ENCODE measurements at regions of chr6 and their contacts with region 1.

Region 1: DNA sequence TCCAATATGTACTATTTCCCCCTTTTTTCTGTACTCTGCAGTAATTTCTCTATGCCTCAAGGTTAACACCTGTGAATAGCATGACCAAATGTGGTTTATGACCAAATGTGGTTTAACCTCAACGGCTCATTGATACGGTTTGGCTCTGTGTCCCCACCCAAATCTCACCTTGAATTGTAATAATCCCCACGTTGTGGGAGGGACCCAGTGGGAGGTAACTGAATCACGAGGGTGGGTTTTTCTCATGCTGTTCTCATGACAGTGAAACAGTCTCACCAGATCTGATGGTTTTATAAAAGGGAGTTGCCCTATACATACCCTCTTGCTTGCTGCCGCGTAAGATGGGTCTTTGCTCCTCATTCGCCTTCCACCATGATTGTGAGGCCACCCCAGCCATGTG is 18.7 kb downstream of the DEK start:
- DNase-seq: peak in 1 of 5 donors; percentile 39
- H3K4me3 ChIP-seq: no peak overlapping the region
- H3K4me3 Mint-ChIP-seq: peak overlapping the region in 1 of 7 donors; percentile 3
- H3K27ac ChIP-seq: no peak overlapping the region
- H3K27ac Mint-ChIP-seq: peak overlapping the region in 6 of 8 donors; percentile 26 to 82 (median 67)
- H3K4me1 ChIP-seq: peaks cover 14% of the 10 kb centered on the region
- H3K4me1 Mint-ChIP-seq: peaks cover 54 to 83% (median 71%) of the 10 kb centered on the region in 3 donors
- H3K27me3 ChIP-seq: no peaks in the 10 kb centered on the region
- H3K27me3 Mint-ChIP-seq: no peaks in the 10 kb centered on the region

Region 2: DNA sequence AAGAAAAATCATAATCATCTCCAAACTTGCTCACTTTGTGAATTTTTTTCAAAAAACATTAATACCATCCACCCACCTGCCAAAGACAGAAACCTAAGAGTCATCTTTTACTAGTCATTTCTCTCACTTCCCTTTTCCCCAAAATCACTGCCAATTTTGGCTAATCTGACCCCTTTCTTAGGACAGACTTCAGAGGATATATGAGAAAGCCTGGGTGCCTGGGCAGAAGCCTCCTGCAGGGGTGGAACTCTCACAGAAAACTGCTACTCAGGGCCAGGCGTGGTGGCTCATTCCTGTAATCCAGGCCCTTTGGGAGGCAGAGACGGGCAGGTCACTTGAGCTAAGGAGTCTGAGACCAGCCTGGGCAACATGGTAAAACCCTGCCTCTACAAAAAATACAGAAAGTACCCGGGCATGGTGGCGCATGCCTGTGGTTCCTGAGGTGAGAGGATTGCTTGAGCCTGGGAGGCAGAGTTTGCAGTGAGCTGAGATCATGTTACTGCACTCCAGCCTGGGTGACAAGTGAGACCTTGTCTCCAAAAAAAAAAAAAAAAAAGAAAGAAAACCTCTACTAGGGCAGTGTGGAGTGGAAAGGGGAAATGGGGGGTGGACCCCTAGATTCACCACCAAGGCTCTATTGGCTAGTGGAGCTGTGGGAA is 14.9 kb after region 1 on chr6:
- CTCF ChIA-PET with region 1: interaction called, 4 read pairs
- POLR2A ChIA-PET with region 1: interaction called, 10 read pairs
- DNase-seq: peak in 1 of 5 donors; percentile 11
- H3K4me3 ChIP-seq: no peak overlapping the region
- H3K4me3 Mint-ChIP-seq: peak overlapping the region; percentile 56 to 97 (median 82)
- H3K27ac ChIP-seq: no peak overlapping the region
- H3K27ac Mint-ChIP-seq: peak overlapping the region; percentile 41 to 97 (median 72)
- H3K4me1 ChIP-seq: peaks cover 35% of the 10 kb centered on the region
- H3K4me1 Mint-ChIP-seq: peaks cover 60 to 68% (median 66%) of the 10 kb centered on the region in 3 donors
- H3K27me3 ChIP-seq: no peaks in the 10 kb centered on the region
- H3K27me3 Mint-ChIP-seq: no peaks in the 10 kb centered on the region

Measured in CD8-positive, alpha-beta memory T cell (primary cell).